CD8-positive, alpha-beta T cell (primary cell): ENCODE measurements at regions of chr20 and their contacts with region 1.

Region 1: DNA sequence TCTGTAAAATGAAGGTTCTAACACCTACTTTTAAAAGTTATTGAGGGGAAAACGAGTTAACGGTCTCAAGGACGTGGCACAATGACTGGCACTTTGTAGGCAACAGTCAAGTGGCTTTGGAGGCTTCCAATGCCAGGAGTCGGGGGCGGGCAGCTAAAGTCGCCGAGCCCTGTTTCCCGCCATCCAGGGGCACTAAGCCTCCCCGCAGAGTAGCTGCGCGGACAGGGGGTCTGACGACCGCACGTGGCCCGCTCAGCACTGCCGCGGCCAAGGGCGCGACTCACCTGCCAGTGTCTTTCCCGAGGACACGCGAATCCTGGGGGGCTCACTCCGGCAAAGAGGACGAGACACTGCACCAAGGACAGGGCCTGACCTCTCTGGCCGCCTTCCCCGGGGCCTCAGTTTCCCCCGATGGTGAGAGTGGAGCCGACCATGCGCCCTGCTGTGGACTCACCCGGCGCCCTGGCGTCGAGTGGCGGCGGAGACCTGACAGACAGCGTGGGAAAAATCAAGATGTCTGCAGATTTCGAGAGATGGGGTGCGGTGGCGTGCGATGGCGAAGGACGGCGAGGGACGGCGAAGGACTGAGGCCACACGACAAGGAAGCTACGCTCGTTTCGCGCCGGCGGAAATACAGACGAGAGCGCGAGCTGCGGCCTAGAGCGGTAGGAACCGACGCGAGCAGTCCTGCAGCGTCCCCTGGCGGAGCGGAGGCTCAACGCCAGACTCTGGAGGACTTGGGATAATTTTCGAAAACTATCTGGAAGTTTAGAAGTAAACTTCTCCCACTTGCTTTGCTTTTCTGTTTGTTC is at the start of gene SNHG17:
- DNase-seq: peak; percentile 73 to 97 (median 88)
- ATAC-seq: peak; percentile 87
- H3K4me3 ChIP-seq: peak within 1 kb of the TSS; percentile 76 to 93
- H3K4me3 Mint-ChIP-seq: peak within 1 kb of the TSS; percentile 93
- H3K27ac ChIP-seq: peak within 1 kb of the TSS; percentile 81 to 88
- H3K27ac Mint-ChIP-seq: peak within 1 kb of the TSS; percentile 96
- H3K4me1 ChIP-seq: peaks cover 22% of the 10 kb centered on the region
- H3K4me1 Mint-ChIP-seq: peaks cover 40% of the 10 kb centered on the region
- H3K27me3 ChIP-seq: no peaks in the 10 kb centered on the region
- H3K27me3 Mint-ChIP-seq: peaks cover 10% of the 10 kb centered on the region
- CTCF ChIP-seq: peak; percentile 100
- total RNA-seq, gene SNHG17: 119 to 128 TPM

Region 2: GRCh38 chr20:37282556-37282955 is 1152.4 kb before region 1 on chr20:
- CTCF ChIA-PET with region 1: no interaction called
- POLR2A ChIA-PET with region 1: no interaction called
- intact Hi-C with region 1: loop called in 1 of 2 experiments (anchors 10 kb)
- DNase-seq: no peak
- ATAC-seq: no peak
- H3K4me3 ChIP-seq: no peak overlapping the region
- H3K4me3 Mint-ChIP-seq: no peak overlapping the region
- H3K27ac ChIP-seq: no peak overlapping the region
- H3K27ac Mint-ChIP-seq: no peak overlapping the region
- H3K4me1 ChIP-seq: no peaks in the 10 kb centered on the region
- H3K4me1 Mint-ChIP-seq: no peaks in the 10 kb centered on the region
- H3K27me3 ChIP-seq: no peaks in the 10 kb centered on the region
- H3K27me3 Mint-ChIP-seq: peaks cover 7% of the 10 kb centered on the region
- CTCF ChIP-seq: no peak

Region 3: DNA sequence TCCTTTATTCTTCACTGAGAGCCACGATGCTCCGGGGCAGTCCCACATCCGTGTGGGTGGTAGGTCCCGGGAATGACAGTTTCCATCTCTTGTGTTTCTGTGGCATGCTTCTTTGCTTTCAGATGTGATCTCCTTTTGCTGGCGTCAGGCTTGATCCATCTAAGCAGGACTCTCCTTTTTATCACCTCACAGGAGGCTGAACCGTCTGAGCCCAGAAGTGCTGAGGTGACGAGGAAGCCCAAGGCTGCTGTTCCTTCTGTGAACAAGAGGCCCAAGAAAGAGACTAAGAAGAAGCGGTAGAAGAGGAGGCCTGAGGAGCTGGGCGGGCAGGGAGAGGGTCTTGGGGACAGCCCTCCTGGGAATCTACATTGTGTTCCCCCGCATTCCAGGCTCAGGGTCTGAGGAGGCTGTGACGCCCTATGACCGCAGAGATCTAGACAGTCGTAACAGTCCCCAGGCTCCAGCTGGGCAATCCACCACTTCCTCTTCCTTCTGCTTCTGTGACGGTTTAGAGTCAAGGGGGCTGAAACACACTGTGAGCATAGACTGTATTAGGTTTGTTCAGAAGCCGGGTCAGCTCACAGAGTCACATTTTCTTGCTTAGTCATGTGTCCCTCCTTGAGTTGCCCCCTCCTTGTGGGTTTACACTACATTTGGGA is 1118.7 kb before region 1 on chr20:
- CTCF ChIA-PET with region 1: no interaction called
- POLR2A ChIA-PET with region 1: no interaction called
- intact Hi-C with region 1: no loop called
- DNase-seq: peak in 4 of 9 experiments; percentile 26 to 63 (median 39)
- ATAC-seq: peak; percentile 90
- H3K4me3 ChIP-seq: no peak overlapping the region
- H3K4me3 Mint-ChIP-seq: peak overlapping the region; percentile 27
- H3K27ac ChIP-seq: peak overlapping the region; percentile 34 to 52
- H3K27ac Mint-ChIP-seq: peak overlapping the region; percentile 96
- H3K4me1 ChIP-seq: peaks cover 13% of the 10 kb centered on the region
- H3K4me1 Mint-ChIP-seq: peaks cover 31% of the 10 kb centered on the region
- H3K27me3 ChIP-seq: no peaks in the 10 kb centered on the region
- H3K27me3 Mint-ChIP-seq: no peaks in the 10 kb centered on the region
- CTCF ChIP-seq: no peak

Region 4: GRCh38 chr20:38187512-38187911 is 247.4 kb before region 1 on chr20:
- CTCF ChIA-PET with region 1: no interaction called
- POLR2A ChIA-PET with region 1: no interaction called
- intact Hi-C with region 1: no loop called
- DNase-seq: no peak
- ATAC-seq: no peak
- H3K4me3 ChIP-seq: no peak overlapping the region
- H3K4me3 Mint-ChIP-seq: no peak overlapping the region
- H3K27ac ChIP-seq: no peak overlapping the region
- H3K27ac Mint-ChIP-seq: no peak overlapping the region
- H3K4me1 ChIP-seq: no peaks in the 10 kb centered on the region
- H3K4me1 Mint-ChIP-seq: no peaks in the 10 kb centered on the region
- H3K27me3 ChIP-seq: peaks cover 0 to 2% of the 10 kb centered on the region in 2 experiments
- H3K27me3 Mint-ChIP-seq: peaks cover 10% of the 10 kb centered on the region
- CTCF ChIP-seq: no peak

Region 5: GRCh38 chr20:38304845-38305447 is 130.0 kb before region 1 on chr20:
- CTCF ChIA-PET with region 1: no interaction called
- POLR2A ChIA-PET with region 1: no interaction called
- intact Hi-C with region 1: no loop called
- DNase-seq: peak in 1 of 9 experiments; percentile 15
- ATAC-seq: no peak
- H3K4me3 ChIP-seq: no peak overlapping the region
- H3K4me3 Mint-ChIP-seq: no peak overlapping the region
- H3K27ac ChIP-seq: no peak overlapping the region
- H3K27ac Mint-ChIP-seq: no peak overlapping the region
- H3K4me1 ChIP-seq: peaks cover 6% of the 10 kb centered on the region
- H3K4me1 Mint-ChIP-seq: peaks cover 13% of the 10 kb centered on the region
- H3K27me3 ChIP-seq: peaks cover 3 to 5% of the 10 kb centered on the region in 2 experiments
- H3K27me3 Mint-ChIP-seq: peaks cover 58% of the 10 kb centered on the region
- CTCF ChIP-seq: no peak

Region 6: DNA sequence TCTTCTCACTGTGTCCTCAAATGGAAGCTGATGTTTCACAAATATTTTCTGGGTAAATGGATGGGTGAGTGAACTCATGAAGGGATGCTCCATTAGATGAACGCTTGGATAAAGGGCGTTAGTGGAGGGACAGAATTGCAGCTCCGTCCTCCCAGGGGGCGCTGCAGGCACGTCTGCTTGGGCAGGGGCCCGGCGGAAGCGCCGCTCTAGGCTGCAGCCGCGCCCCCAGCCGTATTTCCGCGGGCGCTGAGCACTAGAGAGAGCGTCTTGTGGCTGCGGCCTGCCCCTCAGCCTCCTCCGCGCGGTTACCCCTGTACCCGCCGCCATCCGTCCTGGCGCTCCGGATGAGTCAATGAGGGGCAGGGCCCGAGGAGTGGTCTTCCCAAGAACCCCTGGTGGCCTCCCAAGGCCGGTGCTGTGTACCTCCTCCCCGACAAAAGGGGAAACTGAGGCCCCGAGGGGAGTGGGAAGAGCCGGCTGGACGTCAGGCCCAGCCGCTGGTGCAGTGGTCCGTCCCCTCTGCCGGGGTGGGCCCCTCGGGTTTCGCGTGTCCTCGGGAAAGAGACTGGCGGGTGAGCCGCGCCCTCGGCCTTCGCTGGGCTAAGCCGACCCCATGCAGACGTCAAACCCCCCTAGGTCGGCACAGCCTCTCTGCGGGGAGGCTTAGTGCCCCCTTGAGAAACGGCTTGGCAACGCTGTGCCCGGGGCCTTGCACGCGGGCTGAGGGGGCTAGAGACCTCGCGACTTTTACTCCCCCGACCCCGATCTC is 11.7 kb after region 1 on chr20:
- CTCF ChIA-PET with region 1: interaction called, 66 read pairs
- POLR2A ChIA-PET with region 1: interaction called, 75 read pairs
- intact Hi-C with region 1: loop called (anchors 1 kb)
- DNase-seq: peak; percentile 84 to 96 (median 92)
- ATAC-seq: peak; percentile 97
- H3K4me3 ChIP-seq: peak overlapping the region; percentile 84
- H3K4me3 Mint-ChIP-seq: peak overlapping the region; percentile 88
- H3K27ac ChIP-seq: peak overlapping the region; percentile 65 to 83
- H3K27ac Mint-ChIP-seq: peak overlapping the region; percentile 94
- H3K4me1 ChIP-seq: peaks cover 19% of the 10 kb centered on the region
- H3K4me1 Mint-ChIP-seq: peaks cover 25% of the 10 kb centered on the region
- H3K27me3 ChIP-seq: no peaks in the 10 kb centered on the region
- H3K27me3 Mint-ChIP-seq: peaks cover 2% of the 10 kb centered on the region
- CTCF ChIP-seq: peak; percentile 99

Region 7: GRCh38 chr20:38926142-38926933 is 491.4 kb after region 1 on chr20 and contains the start of gene FAM83D:
- CTCF ChIA-PET with region 1: no interaction called
- POLR2A ChIA-PET with region 1: no interaction called
- intact Hi-C with region 1: loop called in 1 of 2 experiments (anchors 10 kb)
- DNase-seq: peak; percentile 77 to 96 (median 91)
- ATAC-seq: peak; percentile 93
- H3K4me3 ChIP-seq: peak within 1 kb of the TSS; percentile 52 to 78
- H3K4me3 Mint-ChIP-seq: peak within 1 kb of the TSS; percentile 79
- H3K27ac ChIP-seq: peak within 1 kb of the TSS; percentile 35 to 47
- H3K27ac Mint-ChIP-seq: peak within 1 kb of the TSS; percentile 34
- H3K4me1 ChIP-seq: peaks cover 14% of the 10 kb centered on the region
- H3K4me1 Mint-ChIP-seq: peaks cover 25% of the 10 kb centered on the region
- H3K27me3 ChIP-seq: no peaks in the 10 kb centered on the region
- H3K27me3 Mint-ChIP-seq: no peaks in the 10 kb centered on the region
- CTCF ChIP-seq: no peak
- total RNA-seq, gene FAM83D: 5.3 to 6.3 TPM